ENCODE measurements at regions of chr4 and their contacts with region 1.

Region 1: DNA sequence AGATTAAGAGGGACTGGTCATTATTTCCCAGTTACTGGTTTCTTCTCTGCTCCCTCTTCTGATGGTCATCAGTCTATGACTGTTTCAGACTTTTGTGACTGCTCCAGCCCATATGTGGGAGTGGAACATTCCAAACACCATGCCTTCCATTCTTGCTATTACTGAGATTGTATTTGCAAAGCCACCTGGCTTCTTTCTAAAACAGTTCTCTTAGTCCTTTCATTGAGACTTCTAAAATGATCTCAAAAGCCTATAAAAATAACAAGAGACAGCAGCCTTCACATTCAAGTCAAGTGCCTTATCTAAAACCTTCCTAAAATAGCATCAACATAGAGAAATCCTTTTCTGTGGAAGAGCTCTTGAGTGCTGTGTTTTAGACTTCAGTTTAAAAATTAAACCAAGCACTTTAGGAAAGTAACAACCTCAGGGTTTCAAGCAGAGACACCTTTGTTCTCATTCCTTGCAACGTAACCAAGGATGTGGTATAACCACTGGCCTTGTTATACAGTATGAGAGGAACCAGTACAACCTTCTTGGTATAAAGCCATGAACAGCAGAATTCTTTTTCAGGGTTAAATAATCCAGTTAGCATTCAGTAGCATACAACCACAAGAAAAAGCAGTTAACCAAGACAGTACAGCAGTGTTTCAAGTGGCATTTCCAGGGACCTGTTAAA is 97.1 kb downstream of the NFKB1 start:
- DNase-seq: peak; percentile 75
- ATAC-seq: peak; percentile 93
- H3K4me3 Mint-ChIP-seq: peak overlapping the region; percentile 61
- H3K27ac Mint-ChIP-seq: peak overlapping the region; percentile 98
- H3K4me1 Mint-ChIP-seq: peaks cover 84% of the 10 kb centered on the region
- H3K27me3 Mint-ChIP-seq: no peaks in the 10 kb centered on the region

Region 2: DNA sequence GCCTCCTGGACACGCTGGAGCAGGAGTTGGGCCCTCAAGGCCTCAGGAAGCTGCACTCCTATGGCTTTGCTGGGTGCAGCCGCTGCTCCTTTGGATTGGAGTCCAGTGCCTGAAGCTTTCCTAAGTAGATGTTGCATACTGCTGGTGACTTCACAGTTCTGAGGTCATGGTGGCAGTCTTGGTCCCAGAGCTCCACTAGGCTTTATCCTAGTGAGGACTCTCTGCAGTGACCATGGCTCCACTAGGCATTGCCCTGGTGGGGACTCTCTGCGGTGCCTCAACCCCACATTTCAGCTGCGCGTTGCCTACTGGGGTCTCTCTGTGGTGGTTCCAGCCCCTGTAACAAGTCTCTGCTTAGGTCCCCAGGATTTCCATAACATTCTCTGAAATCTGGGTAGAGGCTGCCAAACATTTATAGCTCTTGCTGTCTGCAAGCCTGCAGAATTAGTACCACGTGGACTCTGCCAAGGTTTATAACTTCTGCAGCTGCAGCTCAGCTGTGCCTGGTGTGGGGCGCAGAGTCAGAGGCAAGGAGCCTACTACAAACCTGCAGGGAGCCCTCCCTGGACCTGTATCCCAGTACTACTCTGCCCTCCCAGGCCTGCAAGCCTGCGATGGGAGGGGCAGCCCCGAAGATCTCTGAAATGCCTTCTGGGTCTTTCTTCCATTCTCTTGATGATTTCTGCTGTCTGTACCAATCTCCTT is 143.1 kb before region 1 on chr4:
- CTCF ChIA-PET with region 1: no interaction called
- POLR2A ChIA-PET with region 1: no interaction called
- DNase-seq: no peak
- ATAC-seq: no peak
- H3K4me3 Mint-ChIP-seq: no peak overlapping the region
- H3K27ac Mint-ChIP-seq: no peak overlapping the region
- H3K4me1 Mint-ChIP-seq: peaks cover 17% of the 10 kb centered on the region
- H3K27me3 Mint-ChIP-seq: no peaks in the 10 kb centered on the region

Region 3: GRCh38 chr4:102586644-102587021 is 11.6 kb before region 1 on chr4:
- CTCF ChIA-PET with region 1: interaction called, 10 read pairs
- POLR2A ChIA-PET with region 1: interaction called, 23 read pairs
- DNase-seq: peak; percentile 86
- ATAC-seq: peak; percentile 84
- H3K4me3 Mint-ChIP-seq: peak overlapping the region; percentile 64
- H3K27ac Mint-ChIP-seq: peak overlapping the region; percentile 88
- H3K4me1 Mint-ChIP-seq: peaks cover 92% of the 10 kb centered on the region
- H3K27me3 Mint-ChIP-seq: no peaks in the 10 kb centered on the region

Measured in activated CD8-positive, alpha-beta T cell treated with anti-CD3 and anti-CD28 coated beads, Interleukin-2, amount 10 ng/mL, durations not matched to agents 7 days and 5 days (primary cell).